PC-3 (cell line): ENCODE measurements at regions of chrX and their contacts with region 1.

Region 1: GRCh38 chrX:10254741-10255140 is 98.0 kb downstream of the CLCN4 start:
- DNase-seq: peak; percentile 71
- ATAC-seq: peak; percentile 74
- H3K4me3 ChIP-seq: no peak overlapping the region
- H3K27ac ChIP-seq: no peak overlapping the region
- H3K4me1 ChIP-seq: no peaks in the 10 kb centered on the region
- H3K27me3 ChIP-seq: no peaks in the 10 kb centered on the region
- CTCF ChIP-seq: peak; percentile 66

Region 2: DNA sequence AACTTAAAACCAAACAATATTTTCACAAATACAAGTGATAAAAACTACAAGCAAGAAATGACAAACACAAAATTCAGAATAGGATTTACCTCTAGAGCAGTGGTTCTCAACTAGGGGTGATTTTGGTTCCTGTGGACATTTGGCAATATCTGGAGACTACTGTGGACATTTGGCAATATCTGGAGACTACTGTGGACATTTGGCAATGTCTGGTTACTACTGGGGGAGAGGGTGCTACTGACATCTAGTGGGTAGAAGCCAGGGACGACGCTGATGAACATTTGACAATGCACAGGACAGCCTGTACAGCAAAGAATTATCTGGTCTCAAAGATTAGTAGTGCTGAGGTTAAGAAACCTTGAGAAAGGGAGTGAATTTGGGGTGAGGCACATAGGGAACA is 71.8 kb after region 1 on chrX:
- CTCF ChIA-PET with region 1: no interaction called
- POLR2A ChIA-PET with region 1: no interaction called
- intact Hi-C with region 1: loop called (anchors 2 kb)
- DNase-seq: peak; percentile 52
- ATAC-seq: peak; percentile 77
- H3K4me3 ChIP-seq: no peak overlapping the region
- H3K27ac ChIP-seq: no peak overlapping the region
- H3K4me1 ChIP-seq: peaks cover 9% of the 10 kb centered on the region
- H3K27me3 ChIP-seq: no peaks in the 10 kb centered on the region
- CTCF ChIP-seq: peak; percentile 56

Region 3: GRCh38 chrX:10450229-10450958 is 195.7 kb after region 1 on chrX:
- CTCF ChIA-PET with region 1: no interaction called
- POLR2A ChIA-PET with region 1: no interaction called
- intact Hi-C with region 1: loop called (anchors 5 kb)
- DNase-seq: peak; percentile 84
- ATAC-seq: peak; percentile 70
- H3K4me3 ChIP-seq: no peak overlapping the region
- H3K27ac ChIP-seq: peak overlapping the region; percentile 59
- H3K4me1 ChIP-seq: peaks cover 47% of the 10 kb centered on the region
- H3K27me3 ChIP-seq: no peaks in the 10 kb centered on the region
- CTCF ChIP-seq: no peak

Region 4: DNA sequence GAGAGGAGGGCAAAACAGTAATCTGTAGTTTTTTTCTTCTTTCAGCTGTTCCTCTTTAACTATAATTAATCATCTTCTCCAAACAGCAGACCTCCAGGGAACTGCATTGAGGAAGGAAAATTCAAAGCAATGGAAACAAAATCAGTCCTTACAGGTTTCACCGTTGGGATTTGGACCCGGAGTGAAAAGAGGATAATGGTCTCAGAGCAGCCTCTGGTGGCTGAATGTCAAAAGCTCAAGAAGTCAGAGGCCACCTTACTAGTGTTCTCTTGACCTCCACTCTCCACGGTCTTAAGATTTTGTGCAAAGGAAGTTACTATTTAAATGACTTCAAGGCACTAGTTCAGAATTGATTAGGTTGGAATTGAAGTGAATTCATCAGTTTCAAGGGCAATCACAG is 381.6 kb after region 1 on chrX:
- CTCF ChIA-PET with region 1: interaction called, 5 read pairs
- POLR2A ChIA-PET with region 1: interaction called, 5 read pairs
- intact Hi-C with region 1: loop called (anchors 1 kb)
- DNase-seq: peak; percentile 80
- ATAC-seq: peak; percentile 25
- H3K4me3 ChIP-seq: peak overlapping the region; percentile 51; the same call in 1 of the 2 replicates
- H3K27ac ChIP-seq: peak overlapping the region; percentile 97; the same call in 1 of the 2 replicates
- H3K4me1 ChIP-seq: peaks cover 44% of the 10 kb centered on the region
- H3K27me3 ChIP-seq: no peaks in the 10 kb centered on the region
- CTCF ChIP-seq: peak; percentile 82

Region 5: GRCh38 chrX:11100281-11101035 is 845.7 kb after region 1 on chrX:
- CTCF ChIA-PET with region 1: no interaction called
- POLR2A ChIA-PET with region 1: no interaction called
- intact Hi-C with region 1: loop called (anchors 1 kb)
- DNase-seq: peak; percentile 65
- ATAC-seq: peak; percentile 71
- H3K4me3 ChIP-seq: no peak overlapping the region
- H3K27ac ChIP-seq: peak overlapping the region; percentile 34; the same call in 1 of the 2 replicates
- H3K4me1 ChIP-seq: peaks cover 6% of the 10 kb centered on the region
- H3K27me3 ChIP-seq: no peaks in the 10 kb centered on the region
- CTCF ChIP-seq: peak; percentile 73